ENCODE measurements at regions of chr3 and their contacts with region 1.

Region 1: DNA sequence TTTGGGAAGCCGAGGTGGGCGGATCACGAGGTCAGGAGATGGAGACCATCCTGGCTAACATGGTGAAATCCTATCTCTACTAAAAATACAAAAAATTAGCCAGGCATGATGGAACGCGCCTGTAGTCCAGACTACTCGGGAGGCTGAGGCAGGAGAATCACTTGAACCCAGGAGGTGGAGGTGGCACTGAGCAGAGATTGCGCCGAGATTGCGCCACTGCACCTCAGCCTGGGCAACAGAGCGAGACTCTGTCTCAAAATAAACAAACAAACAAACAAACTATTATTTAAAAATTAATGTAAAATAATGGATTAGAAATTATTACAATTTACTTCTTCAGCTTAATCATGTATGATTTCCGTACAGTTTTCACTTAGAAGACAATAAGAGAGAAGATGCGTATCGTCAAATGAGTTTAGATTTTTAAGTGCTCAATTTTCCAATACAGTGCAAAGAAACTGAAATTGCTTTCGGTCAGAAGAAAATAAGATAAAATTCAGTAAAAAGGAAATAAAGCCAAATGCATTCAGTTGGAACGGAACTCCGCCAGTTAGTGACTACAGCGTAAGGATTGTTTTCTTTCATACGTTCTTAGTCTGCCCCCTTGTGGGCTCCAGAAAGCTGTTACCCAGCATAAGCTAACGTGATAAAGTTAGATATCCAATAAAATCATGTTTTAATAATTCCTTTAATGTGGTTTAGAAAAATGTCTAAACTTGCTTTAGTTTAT is 24.8 kb downstream of the AADAC start:
- DNase-seq: peak; percentile 93
- H3K4me3 ChIP-seq: no peak overlapping the region
- H3K27ac ChIP-seq: no peak overlapping the region
- H3K4me1 ChIP-seq: peaks cover 28% of the 10 kb centered on the region
- H3K27me3 ChIP-seq: no peaks in the 10 kb centered on the region

Region 2: GRCh38 chr3:151290673-151291072 is 548.1 kb before region 1 on chr3:
- in situ Hi-C with region 1: loop called (anchors 10 kb)
- DNase-seq: peak; percentile 73
- H3K4me3 ChIP-seq: no peak overlapping the region
- H3K27ac ChIP-seq: no peak overlapping the region
- H3K4me1 ChIP-seq: no peaks in the 10 kb centered on the region
- H3K27me3 ChIP-seq: no peaks in the 10 kb centered on the region

Region 3: GRCh38 chr3:151439652-151440129 is 399.1 kb before region 1 on chr3:
- in situ Hi-C with region 1: loop called (anchors 5 kb)
- DNase-seq: peak; percentile 79
- H3K4me3 ChIP-seq: no peak overlapping the region
- H3K27ac ChIP-seq: no peak overlapping the region
- H3K4me1 ChIP-seq: peaks cover 29% of the 10 kb centered on the region
- H3K27me3 ChIP-seq: no peaks in the 10 kb centered on the region

Region 4: GRCh38 chr3:151660885-151661284 is 177.9 kb before region 1 on chr3:
- in situ Hi-C with region 1: no loop called
- DNase-seq: peak; percentile 37
- H3K4me3 ChIP-seq: no peak overlapping the region
- H3K27ac ChIP-seq: no peak overlapping the region
- H3K4me1 ChIP-seq: no peaks in the 10 kb centered on the region
- H3K27me3 ChIP-seq: 0 out of 2 replicates have a peak, but pooled peaks cover 4% of the 10 kb centered on the region

Region 5: GRCh38 chr3:152071924-152072323 is 233.2 kb after region 1 on chr3:
- in situ Hi-C with region 1: no loop called
- DNase-seq: peak; percentile 78
- H3K4me3 ChIP-seq: no peak overlapping the region
- H3K27ac ChIP-seq: no peak overlapping the region
- H3K4me1 ChIP-seq: peaks cover 11% of the 10 kb centered on the region
- H3K27me3 ChIP-seq: no peaks in the 10 kb centered on the region

Measured in GM23248 (cell line).